ENCODE measurements at regions of chr15 and their contacts with region 1.

Region 1: GRCh38 chr15:48559285-48559684 is 86.2 kb downstream of the FBN1 start:
- DNase-seq: peak in 2 of 5 donors; percentile 30 to 39
- ATAC-seq: peak in 3 of 4 donors; percentile 19 to 57 (median 33)
- H3K4me3 ChIP-seq: no peak overlapping the region
- H3K27ac ChIP-seq: peak overlapping the region in 8 of 12 donors; percentile 1 to 38 (median 24)
- H3K4me1 ChIP-seq: peaks cover 0 to 68% (median 8%) of the 10 kb centered on the region in 12 donors
- H3K27me3 ChIP-seq: no peaks in the 10 kb centered on the region
- CTCF ChIP-seq: no peak
- POLR2A ChIP-seq: no peak

Region 2: GRCh38 chr15:48570822-48571221 is 11.5 kb after region 1 on chr15:
- intact Hi-C with region 1: loop called in 1 of 10 experiments (anchors 2 kb)
- DNase-seq: no peak
- ATAC-seq: peak in 1 of 4 donors; percentile 48
- H3K4me3 ChIP-seq: no peak overlapping the region
- H3K27ac ChIP-seq: no peak overlapping the region
- H3K4me1 ChIP-seq: peaks cover 0 to 18% (median 8%) of the 10 kb centered on the region in 12 donors
- H3K27me3 ChIP-seq: no peaks in the 10 kb centered on the region
- CTCF ChIP-seq: no peak
- POLR2A ChIP-seq: no peak

Region 3: DNA sequence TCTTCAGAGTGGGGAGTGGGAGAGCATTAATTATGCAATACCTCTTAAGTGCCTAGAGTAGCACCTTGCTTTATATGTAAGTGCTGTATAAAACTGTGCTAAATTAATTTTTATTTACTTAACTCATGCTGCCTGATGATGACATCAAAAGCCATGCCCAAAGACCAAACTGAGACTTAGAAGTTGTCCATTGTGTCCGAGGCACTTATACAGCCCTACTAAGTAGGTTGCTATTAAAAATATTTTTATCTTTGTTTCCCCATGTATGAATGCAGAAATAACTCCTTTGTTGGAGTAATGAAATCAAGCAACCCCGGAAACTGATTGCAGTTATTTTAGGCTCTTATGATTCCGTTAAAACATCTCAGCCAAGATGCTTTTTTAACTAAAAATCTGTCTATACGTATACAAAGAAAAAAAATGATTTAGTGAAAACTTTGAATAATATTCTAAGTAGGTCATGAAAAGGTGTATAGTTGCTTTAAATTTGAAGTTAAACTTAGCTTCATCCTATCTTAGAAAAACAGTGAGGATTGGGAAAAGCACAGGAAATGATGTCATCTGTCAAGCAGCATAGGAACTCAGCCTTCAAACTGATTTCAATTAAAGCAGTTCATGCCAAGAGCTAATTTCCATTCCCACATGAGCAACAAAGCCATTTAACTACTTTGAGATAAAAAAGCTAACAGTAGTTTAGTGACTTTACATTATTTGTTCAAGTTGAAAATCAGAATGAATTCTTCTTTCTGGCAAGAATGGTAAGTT is 43.3 kb after region 1 on chr15:
- intact Hi-C with region 1: no loop called
- DNase-seq: no peak
- ATAC-seq: peak in 3 of 4 donors; percentile 28 to 86 (median 83)
- H3K4me3 ChIP-seq: peak overlapping the region in 8 of 12 donors; percentile 4 to 40 (median 26)
- H3K27ac ChIP-seq: peak overlapping the region in 11 of 12 donors; percentile 44 to 81 (median 71)
- H3K4me1 ChIP-seq: peaks cover 0 to 42% (median 20%) of the 10 kb centered on the region in 12 donors
- H3K27me3 ChIP-seq: no peaks in the 10 kb centered on the region
- CTCF ChIP-seq: no peak
- POLR2A ChIP-seq: no peak

Region 4: GRCh38 chr15:48810414-48811317 is 251.4 kb after region 1 on chr15 and contains the start of gene CEP152:
- intact Hi-C with region 1: no loop called
- DNase-seq: peak; percentile 96 to 98 (median 97)
- ATAC-seq: peak; percentile 97 to 99 (median 98)
- H3K4me3 ChIP-seq: peak within 1 kb of the TSS; percentile 22 to 83 (median 72)
- H3K27ac ChIP-seq: peak within 1 kb of the TSS in 4 of 12 donors; percentile 0 to 60 (median 24)
- H3K4me1 ChIP-seq: peaks cover 0 to 25% (median 15%) of the 10 kb centered on the region in 12 donors
- H3K27me3 ChIP-seq: no peaks in the 10 kb centered on the region
- CTCF ChIP-seq: no peak
- POLR2A ChIP-seq: peak in 1 of 2 donors; percentile 42
- total RNA-seq, gene CEP152: 0.90 to 3.2 (median 1.8) TPM

Measured in heart left ventricle (tissue), 16 donors.